Tibial artery (tissue), 4 donors: ENCODE measurements at regions of chr6 and their contacts with region 1.

Region 1: DNA sequence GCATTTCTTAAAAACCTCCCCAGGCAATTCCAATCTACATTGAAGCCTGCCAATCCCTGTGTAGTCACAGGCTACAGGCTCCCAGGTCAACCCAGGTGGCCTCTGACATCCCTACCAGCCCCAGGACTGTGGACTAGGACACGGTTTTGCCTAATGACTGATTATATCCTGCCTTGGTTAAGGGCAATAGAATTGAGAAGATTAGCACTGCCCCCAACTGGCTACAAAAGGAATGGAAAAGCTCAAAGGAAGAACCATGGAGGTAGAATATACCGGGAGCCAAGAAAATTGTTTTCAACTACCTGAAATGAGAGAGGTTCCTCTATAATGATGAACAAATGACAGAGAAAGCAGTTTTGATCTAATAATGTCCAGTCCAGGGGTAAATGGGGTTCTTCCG is 421.1 kb upstream of the AGPAT4 start:
- DNase-seq: no peak
- H3K4me3 ChIP-seq: no peak overlapping the region
- H3K27ac ChIP-seq: no peak overlapping the region
- H3K4me1 ChIP-seq: no peaks in the 10 kb centered on the region
- H3K27me3 ChIP-seq: no peaks in the 10 kb centered on the region
- CTCF ChIP-seq: peak; percentile 40 to 49

Region 2: GRCh38 chr6:161393839-161394364 is 301.1 kb before region 1 on chr6:
- intact Hi-C with region 1: loop called (anchors 10 kb)
- DNase-seq: peak in 1 of 2 donors; percentile 35
- H3K4me3 ChIP-seq: no peak overlapping the region
- H3K27ac ChIP-seq: no peak overlapping the region
- H3K4me1 ChIP-seq: no peaks in the 10 kb centered on the region
- H3K27me3 ChIP-seq: no peaks in the 10 kb centered on the region
- CTCF ChIP-seq: peak; percentile 49 to 64